Common myeloid progenitor, CD34-positive (primary cell): ENCODE measurements at regions of chr14 and their contacts with region 1.

Region 1: GRCh38 chr14:22986508-22987054 is 4.2 kb upstream of the AJUBA start:
- DNase-seq: peak; percentile 88 to 94 (median 89)
- H3K4me3 ChIP-seq: no peak overlapping the region
- H3K27ac ChIP-seq: no peak overlapping the region
- H3K4me1 ChIP-seq: peaks cover 4 to 18% (median 14%) of the 10 kb centered on the region in 4 experiments
- H3K27me3 ChIP-seq: peaks cover 0 to 7% (median 2%) of the 10 kb centered on the region in 5 experiments

Region 2: DNA sequence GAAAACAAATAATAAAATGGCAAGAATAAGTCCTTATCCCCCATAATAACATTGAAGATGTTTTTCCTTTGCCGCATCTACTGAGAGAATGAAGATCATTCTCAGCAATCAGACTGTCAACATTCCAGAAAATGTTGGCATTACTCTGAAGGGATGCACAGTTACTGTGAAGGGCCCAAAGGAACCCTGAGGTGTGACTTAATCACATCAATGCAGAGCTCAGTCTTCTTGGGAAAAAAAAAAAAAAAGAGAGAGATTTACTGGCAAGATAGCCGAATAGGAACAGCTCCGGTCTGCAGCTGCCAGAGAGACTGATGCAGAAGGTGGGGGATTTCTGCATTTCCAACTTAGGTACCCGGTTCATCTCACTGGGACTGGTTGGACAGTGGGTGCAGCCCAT is 301.1 kb before region 1 on chr14:
- CTCF ChIA-PET with region 1: no interaction called
- POLR2A ChIA-PET with region 1: no interaction called
- DNase-seq: no peak
- H3K4me3 ChIP-seq: no peak overlapping the region
- H3K27ac ChIP-seq: no peak overlapping the region
- H3K4me1 ChIP-seq: no peaks in the 10 kb centered on the region
- H3K27me3 ChIP-seq: peaks cover 0 to 4% (median 0%) of the 10 kb centered on the region in 5 experiments

Region 3: DNA sequence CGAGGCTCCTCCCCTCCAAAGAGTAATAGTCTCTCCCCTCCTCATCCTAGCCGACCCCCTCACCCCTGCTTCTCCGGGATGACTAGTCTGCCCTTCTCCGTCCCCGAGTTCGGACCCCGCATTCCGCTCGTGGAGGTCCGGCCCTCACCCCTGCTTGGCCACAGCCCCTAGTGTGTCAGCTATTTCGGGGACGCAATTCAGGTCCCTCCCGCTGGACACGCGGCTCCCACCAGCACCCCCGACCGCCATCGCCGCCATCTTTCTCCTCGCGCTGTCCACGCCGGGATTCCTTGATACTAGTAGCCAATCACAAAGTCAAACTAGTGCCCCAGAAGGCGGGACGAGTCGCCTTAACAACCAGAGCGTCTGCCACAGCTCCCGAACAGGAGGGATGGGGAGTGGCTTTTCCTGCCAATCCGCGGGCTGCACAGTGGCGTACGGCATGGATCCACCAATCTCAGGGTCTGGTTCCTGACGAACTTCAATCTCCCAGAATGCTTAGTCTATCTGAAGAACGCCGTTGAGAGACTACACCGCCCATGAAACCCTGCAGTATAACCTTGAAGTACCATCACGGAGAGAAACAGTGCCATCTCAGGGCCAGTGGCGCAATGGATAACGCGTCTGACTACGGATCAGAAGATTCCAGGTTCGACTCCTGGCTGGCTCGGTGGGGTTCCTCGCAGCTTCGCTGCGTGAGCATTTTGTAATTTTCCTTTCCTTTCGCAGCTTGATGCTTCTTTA is 57.3 kb before region 1 on chr14 and contains the start of gene PRMT5:
- CTCF ChIA-PET with region 1: interaction called, 28 read pairs
- POLR2A ChIA-PET with region 1: interaction called, 3 read pairs
- DNase-seq: peak; percentile 100
- H3K4me3 ChIP-seq: peak within 1 kb of the TSS; percentile 73 to 100 (median 96)
- H3K27ac ChIP-seq: peak within 1 kb of the TSS; percentile 70 to 94
- H3K4me1 ChIP-seq: peaks cover 5 to 18% (median 18%) of the 10 kb centered on the region in 4 experiments
- H3K27me3 ChIP-seq: no peaks in the 10 kb centered on the region

Region 4: GRCh38 chr14:22939684-22940083 is 46.9 kb before region 1 on chr14:
- CTCF ChIA-PET with region 1: interaction called, 10 read pairs
- POLR2A ChIA-PET with region 1: no interaction called
- DNase-seq: no peak
- H3K4me3 ChIP-seq: no peak overlapping the region
- H3K27ac ChIP-seq: no peak overlapping the region
- H3K4me1 ChIP-seq: no peaks in the 10 kb centered on the region
- H3K27me3 ChIP-seq: no peaks in the 10 kb centered on the region

Region 5: GRCh38 chr14:22955702-22956569 is 30.6 kb before region 1 on chr14:
- CTCF ChIA-PET with region 1: interaction called, 18 read pairs
- POLR2A ChIA-PET with region 1: no interaction called
- DNase-seq: peak in 2 of 3 donors; percentile 5 to 13
- H3K4me3 ChIP-seq: peak overlapping the region; percentile 73 to 95 (median 84)
- H3K27ac ChIP-seq: peak overlapping the region; percentile 33 to 85
- H3K4me1 ChIP-seq: peaks cover 3 to 24% (median 14%) of the 10 kb centered on the region in 4 experiments
- H3K27me3 ChIP-seq: no peaks in the 10 kb centered on the region

Region 6: GRCh38 chr14:22973217-22974032 is 13.2 kb before region 1 on chr14:
- CTCF ChIA-PET with region 1: interaction called, 319 read pairs
- POLR2A ChIA-PET with region 1: no interaction called
- DNase-seq: peak; percentile 36 to 64 (median 42)
- H3K4me3 ChIP-seq: no peak overlapping the region
- H3K27ac ChIP-seq: no peak overlapping the region
- H3K4me1 ChIP-seq: peaks cover 0 to 5% (median 0%) of the 10 kb centered on the region in 4 experiments
- H3K27me3 ChIP-seq: peaks cover 0 to 3% (median 0%) of the 10 kb centered on the region in 5 experiments

Region 7: DNA sequence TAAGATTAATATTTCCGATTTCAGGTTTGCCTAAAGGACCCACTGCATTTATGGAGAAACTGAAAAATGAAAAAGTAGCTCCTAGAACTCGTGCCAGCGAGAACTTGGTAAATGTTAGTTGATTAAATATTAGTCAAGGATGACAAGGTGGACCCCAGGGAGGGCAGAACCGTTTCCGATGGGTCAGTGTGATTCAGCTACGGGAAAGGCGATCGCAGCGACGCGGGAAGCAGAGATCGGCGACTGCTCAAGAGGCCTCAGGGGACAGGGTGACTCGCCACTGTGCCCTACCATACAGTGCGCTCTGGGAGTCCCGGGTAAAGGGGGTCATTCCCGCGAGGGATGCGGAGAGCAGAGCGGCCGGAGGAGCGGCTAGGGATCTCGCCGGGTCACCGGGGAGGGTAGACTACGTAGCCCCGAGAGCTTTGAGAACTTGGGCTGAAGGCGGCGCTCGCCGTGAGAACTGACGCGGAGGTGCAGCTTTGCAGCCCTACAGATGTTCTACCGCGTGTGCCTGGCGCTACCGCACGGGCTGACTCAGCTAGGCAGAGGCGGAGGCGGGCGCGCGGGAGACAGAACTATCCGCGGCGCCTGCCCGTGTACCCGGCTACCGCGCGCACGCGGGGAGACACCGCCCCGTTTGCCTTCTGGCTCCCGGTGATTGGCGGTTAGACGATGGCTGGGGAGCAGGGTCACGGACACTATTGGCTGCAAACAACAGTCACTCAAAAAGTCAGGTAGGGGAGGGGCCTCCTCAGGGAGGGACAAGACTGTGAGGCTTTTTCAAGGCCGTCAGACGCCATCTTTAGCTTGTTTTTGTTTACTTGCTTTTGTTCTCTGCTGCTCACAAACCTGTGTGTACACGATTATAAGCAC is 20.2 kb after region 1 on chr14:
- CTCF ChIA-PET with region 1: interaction called, 28 read pairs
- POLR2A ChIA-PET with region 1: no interaction called
- DNase-seq: peak; percentile 98 to 99 (median 99)
- H3K4me3 ChIP-seq: peak overlapping the region; percentile 47 to 92 (median 86)
- H3K27ac ChIP-seq: peak overlapping the region; percentile 89 to 95
- H3K4me1 ChIP-seq: peaks cover 8 to 34% (median 28%) of the 10 kb centered on the region in 4 experiments
- H3K27me3 ChIP-seq: no peaks in the 10 kb centered on the region

Region 8: DNA sequence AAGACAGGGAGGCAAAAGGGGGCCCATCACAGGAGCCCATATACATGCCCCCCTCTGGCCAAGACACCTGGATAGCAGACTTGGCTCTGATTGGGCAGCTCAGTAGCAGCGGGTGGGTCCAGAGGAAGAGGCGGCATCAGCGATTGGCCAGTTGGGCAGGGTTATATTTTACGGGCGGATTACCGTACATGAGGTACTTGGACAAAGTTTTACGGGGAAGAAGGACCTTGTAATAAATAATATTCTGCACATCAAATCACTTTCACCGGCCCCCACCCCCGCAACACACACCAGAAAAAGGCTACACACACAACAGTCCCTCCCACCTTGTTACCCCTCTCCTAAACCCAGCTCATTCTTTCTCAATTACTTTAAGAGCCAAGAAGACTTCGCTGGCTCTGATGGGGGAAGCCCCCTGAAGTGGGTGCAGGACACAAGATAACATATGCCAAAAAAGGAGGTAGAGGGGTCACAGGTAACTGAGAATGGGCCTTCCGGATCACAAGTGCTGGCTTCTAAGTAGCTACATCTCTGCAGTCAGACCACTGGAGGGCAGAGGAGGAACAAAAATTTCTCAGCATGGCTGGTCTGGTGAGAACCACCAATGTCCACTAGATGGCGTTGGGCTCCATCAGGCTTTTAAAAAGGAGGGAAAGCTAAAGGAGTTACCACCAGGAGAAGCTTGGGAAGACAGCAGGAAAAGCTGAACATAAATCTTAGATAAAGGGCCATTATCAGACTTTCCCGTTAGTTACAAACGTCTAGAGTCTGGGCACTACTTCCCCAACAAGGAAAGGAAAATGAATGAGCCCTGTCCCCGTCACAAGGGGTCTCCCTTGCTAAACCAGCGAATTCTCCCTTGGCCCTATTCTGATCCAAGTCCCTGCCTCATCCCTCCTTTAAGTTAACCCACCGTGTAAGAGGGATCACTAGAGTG is 82.2 kb after region 1 on chr14:
- CTCF ChIA-PET with region 1: interaction called, 933 read pairs
- POLR2A ChIA-PET with region 1: no interaction called
- DNase-seq: peak; percentile 84 to 91 (median 89)
- H3K4me3 ChIP-seq: no peak overlapping the region
- H3K27ac ChIP-seq: no peak overlapping the region
- H3K4me1 ChIP-seq: peaks cover 0 to 33% (median 28%) of the 10 kb centered on the region in 4 experiments
- H3K27me3 ChIP-seq: no peaks in the 10 kb centered on the region